ENCODE measurements at regions of chr1 and their contacts with region 1.

Region 1: GRCh38 chr1:183471743-183472487 is 384 bp upstream of the SMG7 start:
- DNase-seq: peak; percentile 91
- H3K4me3 Mint-ChIP-seq: peak overlapping the region; percentile 90
- H3K27ac Mint-ChIP-seq: peak overlapping the region; percentile 99
- H3K4me1 Mint-ChIP-seq: peaks cover 28% of the 10 kb centered on the region
- H3K27me3 Mint-ChIP-seq: peaks cover 2% of the 10 kb centered on the region

Region 2: DNA sequence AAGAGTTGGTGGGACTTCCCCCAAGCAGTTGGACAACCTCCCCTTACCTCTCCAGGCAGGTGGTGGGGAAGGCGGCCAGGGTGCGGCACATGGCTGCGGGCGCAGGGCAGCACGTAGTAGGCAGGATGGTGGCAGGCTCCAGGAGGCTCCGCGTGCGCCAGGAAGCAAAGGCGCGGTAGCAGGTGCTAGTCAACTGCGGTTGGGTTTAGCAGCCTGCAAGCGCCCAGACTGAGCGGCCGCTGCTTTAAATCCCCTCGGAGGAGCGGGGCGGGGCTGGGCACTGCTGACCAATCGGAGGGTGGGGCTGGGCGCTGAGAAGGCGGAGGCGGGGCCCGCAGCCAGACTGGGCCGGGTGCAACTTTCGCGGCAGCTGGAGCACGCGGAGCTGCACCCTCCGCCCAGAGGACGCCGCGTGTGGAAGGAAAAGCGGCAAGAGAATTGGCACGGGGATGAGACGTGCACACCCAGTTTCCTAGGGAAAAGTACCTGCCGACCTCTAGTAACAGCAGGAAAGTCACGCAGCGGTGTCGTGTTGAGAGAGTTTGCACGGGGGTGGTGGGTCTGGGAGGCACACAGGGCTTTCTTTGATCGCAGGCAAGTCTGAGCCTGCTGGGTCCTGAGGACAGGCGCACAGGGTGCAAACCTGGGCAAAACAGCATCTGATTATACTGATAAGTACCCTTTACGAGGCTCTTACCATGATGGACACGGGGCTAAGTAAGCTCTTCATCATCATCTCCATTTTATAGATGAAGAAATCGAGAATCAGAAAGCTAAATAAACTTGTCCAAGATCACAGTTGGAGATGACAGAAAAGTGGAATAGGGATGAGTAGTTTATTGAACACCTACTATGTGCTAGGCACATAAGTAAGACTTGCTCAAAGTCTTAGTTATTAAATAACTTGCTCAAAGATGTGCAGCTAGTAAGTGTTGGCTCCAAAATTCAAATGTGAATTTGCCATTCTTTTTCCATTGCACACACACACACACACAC is 867.4 kb before region 1 on chr1 and contains the start of gene RGS16:
- intact Hi-C with region 1: loop called (anchors 5 kb)
- DNase-seq: peak; percentile 91
- H3K4me3 Mint-ChIP-seq: peak within 1 kb of the TSS; percentile 25
- H3K27ac Mint-ChIP-seq: no peak within 1 kb of the TSS
- H3K4me1 Mint-ChIP-seq: peaks cover 50% of the 10 kb centered on the region
- H3K27me3 Mint-ChIP-seq: peaks cover 2% of the 10 kb centered on the region
- total RNA-seq, gene RGS16: 138 and 143 TPM in 2 replicates

Region 3: DNA sequence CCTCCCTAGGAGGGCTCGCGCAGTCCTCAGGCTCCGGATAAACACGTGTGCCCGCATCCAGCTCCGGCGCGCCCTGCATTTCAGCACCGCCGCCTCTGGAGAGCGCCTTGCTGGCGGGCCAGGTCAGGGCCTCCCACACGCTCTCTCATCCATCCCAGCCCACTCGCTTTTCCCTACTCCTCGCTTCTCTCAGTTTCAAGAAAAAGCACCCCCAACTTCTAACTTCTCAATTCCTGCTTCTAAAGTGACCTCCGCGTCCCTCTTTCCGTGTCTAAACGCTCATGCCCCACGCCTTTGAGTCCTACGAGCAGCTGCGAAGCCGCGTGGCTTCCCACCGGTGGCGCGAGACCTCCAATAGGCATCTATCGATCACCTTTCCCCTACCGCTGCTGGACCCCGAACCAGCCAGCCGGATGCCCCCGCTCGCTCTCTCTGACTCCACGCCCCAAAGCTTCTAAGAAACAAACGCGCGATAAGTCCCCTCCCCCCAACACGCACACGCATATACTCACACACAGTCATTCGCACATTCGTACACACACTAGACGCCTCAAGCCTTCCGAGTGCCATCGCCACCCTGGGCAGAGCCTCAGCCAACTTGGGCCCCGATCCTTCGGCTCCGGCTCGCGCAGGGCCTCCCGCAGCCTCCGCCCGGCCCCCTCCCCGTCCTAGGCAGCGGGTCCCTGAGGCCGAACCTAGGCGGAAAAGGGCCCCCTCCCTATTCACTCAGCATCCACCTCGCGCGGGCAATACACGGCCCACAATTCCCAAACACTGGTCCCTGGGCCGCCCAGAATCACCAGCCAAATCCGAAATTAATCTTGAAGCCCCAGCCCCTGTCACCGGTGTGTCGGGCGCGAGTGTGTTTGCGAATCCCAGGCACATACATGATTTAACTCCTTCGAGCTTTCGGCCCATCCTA is 54.8 kb before region 1 on chr1:
- intact Hi-C with region 1: no loop called
- DNase-seq: peak; percentile 17
- H3K4me3 Mint-ChIP-seq: peak overlapping the region; percentile 16
- H3K27ac Mint-ChIP-seq: no peak overlapping the region
- H3K4me1 Mint-ChIP-seq: peaks cover 25% of the 10 kb centered on the region
- H3K27me3 Mint-ChIP-seq: peaks cover 46% of the 10 kb centered on the region

Region 4: GRCh38 chr1:183543619-183544204 is 71.8 kb after region 1 on chr1:
- intact Hi-C with region 1: loop called (anchors 1 kb)
- DNase-seq: no peak
- H3K4me3 Mint-ChIP-seq: no peak overlapping the region
- H3K27ac Mint-ChIP-seq: no peak overlapping the region
- H3K4me1 Mint-ChIP-seq: peaks cover 22% of the 10 kb centered on the region
- H3K27me3 Mint-ChIP-seq: no peaks in the 10 kb centered on the region

Region 5: DNA sequence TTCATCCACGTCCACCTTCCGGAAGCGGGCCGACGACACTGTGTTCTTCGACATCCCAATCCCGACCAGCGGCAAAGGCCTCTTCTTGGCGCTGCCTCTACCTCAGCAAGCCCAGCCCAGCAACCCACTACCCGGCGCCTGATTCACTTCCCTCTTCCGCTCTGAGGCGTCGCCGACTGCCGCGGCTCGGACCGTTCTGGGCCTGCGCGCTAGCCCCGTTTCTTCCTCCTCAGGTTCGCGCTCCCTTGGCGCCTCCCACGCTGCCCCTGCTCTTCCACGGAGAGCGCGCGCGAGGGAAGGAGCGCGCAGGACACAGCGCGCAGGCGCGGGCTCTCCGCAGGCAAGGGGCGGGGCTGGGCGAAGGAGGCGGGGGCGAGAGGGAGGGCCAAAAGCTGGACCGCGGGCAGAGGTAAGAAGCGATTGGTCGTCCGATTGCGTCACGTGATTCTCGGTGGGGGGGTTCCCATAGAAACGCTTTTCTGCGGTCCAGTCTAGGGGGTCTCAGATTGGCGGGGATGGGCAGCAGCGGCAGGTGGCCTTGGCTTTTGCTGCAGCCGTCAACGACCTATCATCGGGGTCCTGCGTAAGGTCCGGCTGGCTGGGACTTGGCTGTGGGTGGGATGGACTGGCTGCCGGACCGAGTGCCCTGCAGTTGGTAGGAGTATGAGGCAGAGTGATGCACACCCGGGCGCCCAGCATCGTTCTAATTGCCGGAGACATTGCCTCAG is 163.9 kb after region 1 on chr1 and contains the start of gene ARPC5:
- intact Hi-C with region 1: loop called (anchors 1 kb)
- DNase-seq: peak; percentile 96
- H3K4me3 Mint-ChIP-seq: peak within 1 kb of the TSS; percentile 100
- H3K27ac Mint-ChIP-seq: peak within 1 kb of the TSS; percentile 100
- H3K4me1 Mint-ChIP-seq: peaks cover 46% of the 10 kb centered on the region
- H3K27me3 Mint-ChIP-seq: peaks cover 4% of the 10 kb centered on the region
- total RNA-seq, gene ARPC5: 146 and 154 TPM in 2 replicates

Region 6: DNA sequence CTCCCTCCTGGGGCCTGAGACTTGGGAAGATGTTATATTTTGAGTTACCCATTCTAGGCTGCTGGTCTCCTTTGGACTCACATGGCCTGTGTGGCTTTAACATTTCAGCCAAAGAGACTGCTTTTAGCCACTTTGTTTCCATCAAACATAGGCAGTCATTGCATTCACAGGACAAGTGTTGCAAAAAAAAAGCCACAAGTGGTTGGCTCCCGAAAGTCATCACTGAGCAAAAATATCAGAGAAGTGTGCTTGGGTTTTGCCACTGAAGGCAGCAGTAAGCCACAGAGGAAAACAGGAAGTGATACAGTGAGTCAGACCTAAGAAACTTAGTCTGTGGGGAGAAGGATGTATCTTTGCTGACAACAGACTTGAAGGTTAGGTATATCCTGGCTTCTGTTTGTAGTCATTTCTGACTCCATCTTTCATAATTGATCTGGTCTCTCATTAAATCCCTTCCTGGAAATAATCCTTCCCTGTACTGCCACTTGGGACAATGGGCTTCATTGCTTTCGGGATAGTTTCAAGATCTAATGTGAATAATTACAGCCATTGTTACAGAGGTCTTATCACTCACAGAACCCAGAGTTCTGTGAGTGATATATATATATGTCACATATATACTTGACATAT is 484.8 kb after region 1 on chr1:
- intact Hi-C with region 1: loop called (anchors 1 kb)
- DNase-seq: peak; percentile 69
- H3K4me3 Mint-ChIP-seq: peak overlapping the region; percentile 62
- H3K27ac Mint-ChIP-seq: no peak overlapping the region
- H3K4me1 Mint-ChIP-seq: peaks cover 14% of the 10 kb centered on the region
- H3K27me3 Mint-ChIP-seq: no peaks in the 10 kb centered on the region

Measured in activated T-helper 1 cell treated with anti-CD3 and anti-CD28 coated beads, Interleukin-12 subunit alpha, Interleukin-12 subunit beta, Interleukin-2, Interleukin-4 antibody, amounts not matched to agents 30 ng/mL and 10 ng/mL and 1 ng/mL, durations not matched to agents 14 hours and 24 hours and 36 hours (primary cell).